A673 (cell line): ENCODE measurements at regions of chr7 and their contacts with region 1.

Region 1: DNA sequence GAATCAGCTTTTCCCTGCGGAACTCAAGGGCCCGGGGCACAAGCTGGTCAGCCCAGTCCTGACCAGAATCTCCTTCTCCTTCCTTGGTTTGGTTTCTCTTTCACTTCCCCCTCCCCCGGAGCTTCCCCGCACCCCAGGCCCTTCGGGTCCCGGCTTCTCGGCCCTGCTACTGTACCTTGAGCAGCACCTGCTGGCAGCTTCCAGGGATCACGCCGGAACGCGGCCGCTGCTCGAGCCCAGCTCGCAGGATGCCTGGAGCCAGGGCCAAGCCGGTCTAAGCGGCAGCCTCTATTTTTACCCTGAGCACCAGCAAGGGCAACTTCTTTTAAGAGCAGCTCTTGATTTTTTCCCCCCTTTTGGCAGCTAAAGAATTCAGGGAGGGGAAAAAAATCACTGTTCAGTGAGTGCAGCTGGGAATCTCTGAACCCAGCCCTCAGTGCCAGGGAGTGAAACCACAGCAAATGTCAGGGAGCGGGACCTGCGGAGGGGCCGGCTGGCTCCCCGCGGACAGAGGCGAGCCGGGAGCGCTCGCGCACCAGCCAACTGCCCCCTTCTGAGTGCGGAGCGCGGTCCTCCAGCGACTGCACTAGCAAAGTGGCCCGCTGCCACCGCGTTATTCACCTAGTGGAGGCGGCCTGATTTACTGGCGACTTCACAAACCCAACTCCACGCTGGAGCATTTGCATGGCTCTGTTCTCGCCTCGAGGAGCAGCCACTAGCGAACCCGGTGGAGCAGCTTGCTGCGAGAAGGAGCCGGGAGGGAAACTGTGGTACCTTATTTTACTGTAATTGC is 2.4 kb upstream of the INHBA start:
- DNase-seq: peak; percentile 86
- H3K4me3 ChIP-seq: peak overlapping the region; percentile 47
- H3K27ac ChIP-seq: peak overlapping the region; percentile 18
- H3K4me1 ChIP-seq: peaks cover 12% of the 10 kb centered on the region
- H3K27me3 ChIP-seq: no peaks in the 10 kb centered on the region
- CTCF ChIP-seq: peak; percentile 80

Region 2: DNA sequence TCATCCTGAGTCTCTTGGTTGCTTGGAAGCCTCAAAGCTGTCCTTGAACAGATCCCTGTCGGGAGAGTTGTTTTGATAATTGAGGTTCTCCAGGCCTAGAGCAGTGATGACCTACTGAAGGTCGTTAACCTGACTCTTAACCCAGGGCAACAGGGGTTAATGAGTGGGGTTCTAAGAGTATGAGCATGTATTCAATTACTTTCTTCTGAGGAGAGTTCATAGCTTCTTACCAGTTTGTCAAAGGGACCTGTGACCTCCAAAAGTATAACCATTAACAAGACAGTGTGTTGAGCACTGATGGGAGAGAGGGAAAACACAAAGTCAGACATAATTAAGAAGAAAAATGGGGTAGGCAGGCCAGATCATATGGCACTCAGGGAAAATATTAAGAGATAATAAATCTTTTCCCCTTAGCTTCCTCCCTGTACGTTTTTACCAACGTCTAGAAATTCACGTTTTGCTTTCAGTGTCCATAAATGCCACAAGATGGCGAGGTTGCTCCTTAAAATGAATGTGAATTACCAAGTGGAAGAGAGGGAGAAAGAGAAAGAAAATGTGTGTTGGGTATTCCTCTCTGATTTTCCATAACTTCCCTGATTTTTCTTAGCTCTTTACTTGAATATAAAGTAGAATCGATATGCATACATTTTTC is 1472.9 kb before region 1 on chr7:
- CTCF ChIA-PET with region 1: interaction called, 3 read pairs
- POLR2A ChIA-PET with region 1: no interaction called
- intact Hi-C with region 1: loop called (anchors 5 kb)
- DNase-seq: peak; percentile 70
- H3K4me3 ChIP-seq: no peak overlapping the region
- H3K27ac ChIP-seq: no peak overlapping the region
- H3K4me1 ChIP-seq: no peaks in the 10 kb centered on the region
- H3K27me3 ChIP-seq: no peaks in the 10 kb centered on the region
- CTCF ChIP-seq: peak; percentile 65

Region 3: GRCh38 chr7:40763318-40764287 is 941.7 kb before region 1 on chr7:
- CTCF ChIA-PET with region 1: no interaction called
- POLR2A ChIA-PET with region 1: no interaction called
- intact Hi-C with region 1: loop called (anchors 10 kb)
- DNase-seq: peak; percentile 11
- H3K4me3 ChIP-seq: no peak overlapping the region
- H3K27ac ChIP-seq: no peak overlapping the region
- H3K4me1 ChIP-seq: no peaks in the 10 kb centered on the region
- H3K27me3 ChIP-seq: no peaks in the 10 kb centered on the region
- CTCF ChIP-seq: 0 out of 2 replicates have a peak, but pooled peaks have one; percentile 11

Region 4: DNA sequence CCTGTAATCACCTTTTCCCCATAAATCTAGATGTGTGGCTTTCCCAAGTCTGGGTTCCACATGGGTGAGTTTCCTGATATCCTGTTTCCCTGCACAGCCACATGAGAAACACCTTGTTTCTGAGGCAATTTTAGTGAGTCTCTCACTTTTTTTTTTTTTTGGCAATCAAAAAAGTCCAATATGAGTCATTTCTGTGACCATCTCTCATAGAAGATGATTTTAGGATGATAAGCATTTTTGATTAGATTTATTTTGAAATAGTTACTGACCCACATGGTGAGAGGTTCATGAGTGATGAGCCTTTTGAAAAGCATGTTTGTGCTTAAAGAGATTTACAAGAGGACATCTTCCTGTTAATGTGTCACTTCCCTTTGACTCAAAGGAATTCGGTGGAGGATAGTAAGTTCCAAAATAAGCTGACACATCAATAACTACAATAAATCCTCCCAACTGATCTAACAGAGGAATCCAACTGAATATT is 466.4 kb before region 1 on chr7:
- CTCF ChIA-PET with region 1: no interaction called
- POLR2A ChIA-PET with region 1: no interaction called
- intact Hi-C with region 1: no loop called
- DNase-seq: peak; percentile 22
- H3K4me3 ChIP-seq: no peak overlapping the region
- H3K27ac ChIP-seq: no peak overlapping the region
- H3K4me1 ChIP-seq: no peaks in the 10 kb centered on the region
- H3K27me3 ChIP-seq: no peaks in the 10 kb centered on the region
- CTCF ChIP-seq: no peak

Region 5: GRCh38 chr7:41336981-41337380 is 368.3 kb before region 1 on chr7:
- CTCF ChIA-PET with region 1: interaction called, 13 read pairs
- POLR2A ChIA-PET with region 1: no interaction called
- intact Hi-C with region 1: no loop called
- DNase-seq: no peak
- H3K4me3 ChIP-seq: no peak overlapping the region
- H3K27ac ChIP-seq: no peak overlapping the region
- H3K4me1 ChIP-seq: no peaks in the 10 kb centered on the region
- H3K27me3 ChIP-seq: no peaks in the 10 kb centered on the region
- CTCF ChIP-seq: no peak

Region 6: GRCh38 chr7:41367967-41368882 is 337.1 kb before region 1 on chr7:
- CTCF ChIA-PET with region 1: no interaction called
- POLR2A ChIA-PET with region 1: no interaction called
- intact Hi-C with region 1: loop called (anchors 5 kb)
- DNase-seq: no peak
- H3K4me3 ChIP-seq: no peak overlapping the region
- H3K27ac ChIP-seq: no peak overlapping the region
- H3K4me1 ChIP-seq: no peaks in the 10 kb centered on the region
- H3K27me3 ChIP-seq: no peaks in the 10 kb centered on the region
- CTCF ChIP-seq: no peak